Common myeloid progenitor, CD34-positive (primary cell): ENCODE measurements at regions of chr2 and their contacts with region 1.

Region 1: DNA sequence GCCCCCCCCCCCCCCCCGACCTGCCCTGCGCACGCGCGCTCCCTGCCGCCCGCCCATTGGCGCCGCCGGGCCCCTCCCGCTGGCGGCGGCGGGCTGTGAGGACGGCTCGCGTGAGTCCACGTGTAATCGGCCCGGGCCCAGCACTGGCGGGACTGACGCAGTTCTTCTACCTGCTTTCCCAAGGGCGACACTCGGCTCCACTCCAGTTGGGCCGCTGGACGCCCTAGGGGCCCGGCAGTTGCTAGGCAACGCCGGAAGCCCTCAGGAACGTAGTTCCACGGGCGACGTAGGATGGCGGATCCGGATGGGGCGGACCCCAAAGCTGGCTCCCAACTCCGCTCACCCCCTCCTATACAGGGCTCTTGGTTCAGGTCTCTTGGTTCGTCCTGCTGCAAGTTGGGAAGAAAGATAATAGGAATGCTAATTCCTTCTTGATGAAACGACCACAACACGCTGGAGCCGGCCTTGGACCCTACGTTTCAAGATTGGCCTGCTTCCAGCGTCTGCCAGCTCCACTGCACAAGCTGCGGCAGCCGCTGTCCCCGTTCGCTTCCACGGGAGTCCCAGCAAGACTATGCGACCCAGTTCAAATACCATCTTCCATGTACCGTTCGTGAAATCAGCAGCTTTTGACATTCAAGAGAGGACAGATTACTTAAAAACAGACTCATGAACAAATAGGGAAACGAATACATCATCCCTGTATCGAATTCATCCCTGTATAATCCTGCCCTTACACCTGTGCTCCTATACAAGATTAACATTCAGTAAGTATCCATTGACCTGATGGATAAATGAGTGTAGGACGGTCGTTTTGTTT is 415 bp upstream of the MCFD2 start:
- DNase-seq: peak; percentile 81 to 91 (median 87)
- H3K4me3 ChIP-seq: peak overlapping the region; percentile 79 to 98 (median 92)
- H3K27ac ChIP-seq: peak overlapping the region; percentile 90 to 97
- H3K4me1 ChIP-seq: peaks cover 9 to 32% (median 25%) of the 10 kb centered on the region in 4 experiments
- H3K27me3 ChIP-seq: no peaks in the 10 kb centered on the region

Region 2: GRCh38 chr2:46902465-46902864 is 13.6 kb before region 1 on chr2:
- CTCF ChIA-PET with region 1: no interaction called
- POLR2A ChIA-PET with region 1: no interaction called
- DNase-seq: no peak
- H3K4me3 ChIP-seq: no peak overlapping the region
- H3K27ac ChIP-seq: peak overlapping the region in 1 of 2 experiments; percentile 54
- H3K4me1 ChIP-seq: peaks cover 0 to 9% (median 1%) of the 10 kb centered on the region in 4 experiments
- H3K27me3 ChIP-seq: no peaks in the 10 kb centered on the region

Region 3: DNA sequence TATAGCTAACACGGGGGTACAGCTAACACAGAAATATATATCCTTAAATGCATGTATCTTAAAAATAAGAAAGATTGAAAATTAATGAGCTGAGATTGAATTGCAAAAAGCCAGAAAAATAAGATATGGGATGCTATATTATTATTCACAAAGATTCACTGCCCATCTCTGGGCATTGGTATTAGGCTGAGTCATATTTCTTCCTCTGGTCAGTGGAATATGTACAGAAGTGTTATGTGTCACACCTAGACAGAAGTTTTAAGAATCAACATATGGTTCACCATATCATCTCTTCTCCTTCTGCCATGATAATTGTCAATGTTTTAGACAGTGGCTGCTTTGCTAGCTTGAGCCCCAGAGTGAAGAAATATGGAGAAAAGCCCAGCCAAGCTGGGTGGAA is 13.6 kb after region 1 on chr2:
- CTCF ChIA-PET with region 1: interaction called, 52 read pairs
- POLR2A ChIA-PET with region 1: no interaction called
- DNase-seq: no peak
- H3K4me3 ChIP-seq: no peak overlapping the region
- H3K27ac ChIP-seq: no peak overlapping the region
- H3K4me1 ChIP-seq: peaks cover 0 to 3% (median 0%) of the 10 kb centered on the region in 4 experiments
- H3K27me3 ChIP-seq: no peaks in the 10 kb centered on the region